Cardiac septum (tissue), 1 donor: ENCODE measurements at regions of chr6 and their contacts with region 1.

Region 1: DNA sequence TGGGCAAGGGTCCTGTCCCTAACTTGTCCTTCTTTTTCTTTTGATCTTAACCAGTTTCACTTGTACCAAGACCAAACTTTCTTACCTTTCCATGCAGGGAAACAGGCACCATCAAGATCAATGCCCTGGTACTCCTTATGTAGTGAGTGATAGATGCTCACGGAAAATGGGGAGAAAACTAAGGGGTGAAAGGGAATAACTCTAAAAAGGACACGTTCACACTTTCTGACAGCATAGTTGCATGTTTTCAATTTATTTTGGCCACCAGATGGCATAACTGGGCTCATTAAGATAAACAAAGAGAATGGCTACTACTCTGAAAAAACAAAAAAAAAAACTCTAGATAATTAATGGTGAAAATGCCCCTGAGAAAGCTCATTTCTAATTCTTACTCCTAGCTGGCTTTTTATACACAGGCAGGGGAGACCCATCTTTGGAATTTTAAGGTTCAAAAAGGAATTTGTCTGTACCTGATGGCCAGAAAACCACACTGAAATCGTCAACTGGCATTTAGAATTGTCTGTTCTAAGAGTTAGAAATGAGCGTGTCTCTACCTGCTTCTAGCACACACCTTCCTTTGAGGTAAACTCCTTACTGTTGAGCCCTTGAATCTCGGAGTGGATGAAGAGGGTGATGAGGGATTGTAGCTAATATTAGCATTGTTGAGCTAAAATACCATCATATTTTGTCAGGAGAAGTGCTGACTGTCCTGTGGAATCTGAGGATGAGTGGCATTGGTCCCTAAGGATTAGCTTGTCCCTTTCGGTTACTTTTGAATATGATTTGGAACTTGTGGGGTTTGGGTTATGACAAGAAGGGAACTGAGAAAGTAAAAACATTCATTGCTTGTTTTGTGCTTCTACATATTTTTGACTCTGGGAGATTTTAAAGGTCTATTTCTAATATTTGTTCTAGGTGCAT is 62.2 kb upstream of the DDR1 start:
- DNase-seq: no peak

Region 2: GRCh38 chr6:30775104-30775503 is 47.0 kb before region 1 on chr6:
- intact Hi-C with region 1: loop called (anchors 5 kb)
- DNase-seq: no peak